AG04449 (cell line): ENCODE measurements at regions of chr11 and their contacts with region 1.

Region 1: DNA sequence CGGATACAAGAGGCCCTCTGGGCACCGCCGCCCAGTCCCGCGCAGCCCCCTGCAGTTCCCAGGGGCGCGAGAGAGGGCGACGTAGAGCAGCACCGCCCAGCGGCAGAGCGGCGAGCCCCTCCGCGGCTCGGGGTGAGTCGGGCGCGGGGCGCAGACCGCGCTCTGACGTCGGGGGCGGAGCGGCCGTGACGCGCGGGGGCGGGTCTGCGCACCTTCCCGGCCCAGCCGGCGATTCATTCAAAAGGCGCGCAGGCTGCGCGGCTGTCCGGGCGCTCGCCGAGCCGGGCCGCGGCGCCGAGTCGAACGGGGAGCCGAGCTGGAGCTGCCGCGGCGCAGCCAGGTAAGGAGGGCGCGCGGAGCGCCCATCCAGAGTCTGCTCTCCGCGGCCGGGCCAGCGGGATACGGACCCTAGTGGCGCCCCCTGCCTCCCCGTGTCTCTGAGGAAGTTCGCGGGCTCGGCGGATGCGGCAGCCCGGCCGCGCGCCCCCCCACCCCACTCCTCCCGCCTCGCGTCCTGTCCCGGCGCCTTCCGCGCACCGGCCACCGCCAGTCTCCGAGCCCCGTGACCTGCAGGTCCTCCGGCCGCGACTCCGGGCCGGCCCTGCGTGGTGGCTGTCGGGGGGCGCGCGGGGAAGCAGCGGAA is at the start of gene RELT:
- DNase-seq: no peak
- H3K4me3 ChIP-seq: peak within 1 kb of the TSS; percentile 79
- CTCF ChIP-seq: peak; percentile 89

Region 2: DNA sequence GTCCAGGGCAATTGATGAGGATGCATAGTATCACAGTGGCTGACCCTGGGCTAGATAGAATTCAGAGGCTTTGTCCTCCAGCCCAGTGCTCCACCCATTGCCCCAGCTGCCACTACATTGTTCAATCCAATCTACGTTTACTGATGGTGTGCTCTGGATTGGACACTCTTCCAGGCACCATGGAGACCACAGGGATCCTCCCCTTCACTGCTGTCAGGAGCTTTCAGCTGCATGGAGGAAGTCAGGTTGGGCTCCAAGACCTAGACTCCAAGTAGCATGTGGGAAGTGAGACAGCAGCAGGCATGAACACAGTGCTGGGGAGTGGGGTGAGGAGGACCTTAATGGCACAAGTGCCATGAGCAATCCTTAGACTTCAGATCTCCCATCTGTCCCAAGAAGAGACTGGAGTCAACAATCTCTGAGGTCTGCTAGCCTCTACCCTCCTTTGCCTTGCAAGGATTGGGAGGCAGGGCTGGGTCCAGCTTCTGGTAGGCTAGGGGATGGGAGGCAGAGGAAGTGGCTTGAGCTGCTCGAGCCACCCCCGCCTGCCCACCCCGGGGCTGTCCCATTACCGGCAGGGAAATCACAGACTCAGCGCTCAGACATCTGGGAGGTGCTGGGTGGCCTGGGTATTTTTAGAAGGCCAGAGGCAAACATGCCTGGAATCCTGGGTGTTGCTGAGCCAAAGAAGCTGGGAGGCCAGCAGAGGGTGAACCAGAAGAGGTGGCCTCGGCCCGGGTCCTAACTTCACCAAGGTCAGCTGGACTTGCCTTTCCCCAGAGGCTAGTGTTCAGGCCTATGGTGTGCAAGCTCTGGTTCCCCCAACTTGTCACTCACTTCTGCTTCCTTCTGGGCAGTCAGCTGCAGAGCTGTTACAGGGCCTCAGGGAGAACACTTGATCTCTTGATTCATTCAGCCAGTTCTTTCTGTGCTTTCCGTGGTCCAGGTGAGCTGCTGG is 218.9 kb before region 1 on chr11:
- CTCF ChIA-PET with region 1: no interaction called
- POLR2A ChIA-PET with region 1: no interaction called
- DNase-seq: peak; percentile 65
- H3K4me3 ChIP-seq: peak overlapping the region; percentile 12; the same call in 1 of the 2 replicates
- CTCF ChIP-seq: no peak

Region 3: DNA sequence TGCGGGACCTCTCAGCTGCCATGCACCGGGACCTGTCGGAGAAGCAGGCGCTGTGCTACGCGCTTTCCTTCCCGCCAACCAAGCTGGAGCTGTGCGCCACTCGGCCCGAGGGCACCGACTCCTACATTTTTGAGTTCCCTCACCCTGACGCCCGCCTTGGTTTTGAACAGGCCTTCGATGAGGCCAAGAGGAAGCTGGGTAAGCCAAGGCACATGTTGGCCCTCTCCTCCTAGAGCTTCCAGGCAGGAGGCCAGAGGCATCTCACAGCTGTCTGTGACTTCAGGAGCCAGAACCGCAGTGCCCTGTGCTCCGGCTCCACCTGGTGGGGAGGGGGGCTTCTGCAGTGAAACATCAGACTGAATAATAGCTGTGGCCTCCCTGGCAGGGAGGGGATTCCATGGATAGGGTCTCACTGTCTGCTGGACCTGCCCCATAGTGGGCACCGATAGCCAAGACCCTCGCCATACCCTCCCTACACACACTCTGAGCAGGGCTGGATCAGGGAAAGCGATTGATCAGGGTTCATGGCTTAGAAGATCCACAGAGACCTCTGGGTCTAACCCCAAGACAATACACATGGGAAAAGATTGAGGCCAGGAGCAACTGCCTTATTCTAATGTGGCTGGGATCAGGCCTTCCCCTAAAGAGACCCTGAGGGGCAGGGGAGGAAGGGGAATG is 15.8 kb before region 1 on chr11:
- CTCF ChIA-PET with region 1: interaction called, 263 read pairs
- POLR2A ChIA-PET with region 1: interaction called, 3 read pairs
- DNase-seq: no peak
- H3K4me3 ChIP-seq: no peak overlapping the region
- CTCF ChIP-seq: peak; percentile 46

Region 4: GRCh38 chr11:73366265-73366610 is 10.0 kb before region 1 on chr11:
- CTCF ChIA-PET with region 1: interaction called, 11 read pairs
- POLR2A ChIA-PET with region 1: interaction called, 3 read pairs
- DNase-seq: no peak
- H3K4me3 ChIP-seq: no peak overlapping the region
- CTCF ChIP-seq: no peak

Region 5: GRCh38 chr11:73521621-73522020 is 145.3 kb after region 1 on chr11:
- CTCF ChIA-PET with region 1: no interaction called
- POLR2A ChIA-PET with region 1: no interaction called
- DNase-seq: no peak
- H3K4me3 ChIP-seq: no peak overlapping the region
- CTCF ChIP-seq: no peak

Region 6: DNA sequence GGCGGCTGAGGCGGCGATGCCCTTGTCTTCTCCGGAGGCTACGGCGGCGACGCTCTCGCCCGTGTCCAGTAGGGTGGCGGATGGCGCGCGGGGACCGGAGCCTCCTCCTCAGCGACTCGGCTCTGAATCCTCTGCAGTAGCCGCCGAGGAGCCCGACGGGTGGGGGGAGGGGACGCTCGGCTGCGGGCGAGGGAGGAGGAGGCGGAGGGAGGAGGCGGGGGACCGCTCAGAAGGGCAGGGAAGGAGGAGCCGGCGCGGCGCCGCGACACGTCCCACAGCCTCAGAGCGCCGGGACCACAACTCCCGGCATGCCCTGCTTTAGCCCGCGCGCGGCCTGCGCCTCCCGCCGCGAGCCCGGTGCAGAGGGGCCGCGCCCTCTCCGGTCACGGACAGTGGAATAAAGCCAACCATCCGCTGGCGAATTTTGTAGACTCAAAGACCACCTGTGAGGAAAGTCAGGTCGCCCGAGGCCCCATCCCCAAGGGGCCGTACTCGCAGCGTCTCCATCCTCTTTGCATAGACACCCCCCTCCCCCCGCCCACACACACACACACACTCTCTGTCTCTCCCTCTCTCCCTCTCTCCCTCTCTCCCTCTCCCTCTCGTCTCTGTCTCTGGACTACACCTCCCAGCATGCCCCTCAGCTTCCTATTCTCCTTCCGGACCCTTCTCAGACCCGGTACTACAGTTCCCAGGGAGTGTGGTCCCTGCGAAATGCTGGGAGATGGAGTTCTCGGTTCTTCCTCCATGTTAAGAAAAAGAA is 221.9 kb after region 1 on chr11 and contains the start of gene FAM168A:
- CTCF ChIA-PET with region 1: no interaction called
- POLR2A ChIA-PET with region 1: no interaction called
- DNase-seq: peak; percentile 84
- H3K4me3 ChIP-seq: peak within 1 kb of the TSS; percentile 82
- CTCF ChIP-seq: peak; percentile 26